Activated CD4-positive, alpha-beta T cell treated with anti-CD3 and anti-CD28 coated beads for 36 hours (primary cell): ENCODE measurements at regions of chr1 and their contacts with region 1.

Region 1: DNA sequence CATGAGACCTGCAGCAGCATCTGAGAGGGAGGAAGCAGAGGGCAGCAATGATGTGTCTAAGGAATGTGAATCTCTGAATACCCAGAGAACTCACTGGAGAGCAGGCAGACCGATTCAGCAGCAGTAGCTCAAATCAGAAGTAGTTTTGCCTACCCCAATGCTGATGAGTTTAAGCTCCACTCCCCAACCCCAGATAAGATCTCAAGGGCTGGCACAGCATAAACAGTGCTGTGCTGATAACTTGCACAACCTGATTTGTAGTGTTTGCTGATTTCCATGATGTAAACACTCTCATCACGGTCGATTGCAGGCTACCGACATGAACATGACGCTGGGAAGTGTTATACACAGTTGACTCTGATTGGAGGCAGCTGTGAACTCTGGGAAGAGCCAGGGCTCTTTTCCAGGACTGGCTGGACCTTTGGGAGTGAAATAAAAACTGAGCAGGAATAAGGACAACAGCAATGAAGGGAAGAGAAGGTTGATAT is 11.2 kb upstream of the HMGCS2 start:
- DNase-seq: no peak
- ATAC-seq: no peak
- H3K4me3 Mint-ChIP-seq: no peak overlapping the region
- H3K27ac Mint-ChIP-seq: no peak overlapping the region
- H3K4me1 Mint-ChIP-seq: no peaks in the 10 kb centered on the region
- H3K27me3 Mint-ChIP-seq: peaks cover 7% of the 10 kb centered on the region

Region 2: GRCh38 chr1:119743781-119744597 is 35.9 kb before region 1 on chr1:
- CTCF ChIA-PET with region 1: interaction called, 3 read pairs
- POLR2A ChIA-PET with region 1: no interaction called
- intact Hi-C with region 1: loop called in 1 of 2 experiments (anchors 2 kb)
- DNase-seq: peak; percentile 76
- ATAC-seq: peak; percentile 83
- H3K4me3 Mint-ChIP-seq: no peak overlapping the region
- H3K27ac Mint-ChIP-seq: no peak overlapping the region
- H3K4me1 Mint-ChIP-seq: peaks cover 13% of the 10 kb centered on the region
- H3K27me3 Mint-ChIP-seq: no peaks in the 10 kb centered on the region

Region 3: DNA sequence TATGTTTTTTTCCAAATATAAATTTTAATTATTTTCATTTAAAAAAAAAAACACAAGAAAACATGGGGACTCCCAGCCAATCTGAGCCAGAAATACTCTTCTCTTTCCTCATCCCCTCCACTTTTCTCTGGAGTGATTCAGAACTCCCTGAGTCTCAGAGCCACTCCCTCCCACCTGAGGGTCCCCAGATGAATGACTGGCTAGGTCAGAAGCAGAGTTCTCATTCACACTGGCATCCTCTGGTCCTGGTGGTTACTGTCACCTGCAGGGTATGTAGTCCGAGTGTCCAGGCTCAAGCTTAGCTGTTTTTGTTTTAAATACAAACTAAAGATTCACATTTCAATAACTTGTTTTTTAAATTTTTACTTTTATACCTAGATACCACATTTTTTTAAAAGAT is 17.5 kb before region 1 on chr1:
- CTCF ChIA-PET with region 1: interaction called, 3 read pairs
- POLR2A ChIA-PET with region 1: no interaction called
- intact Hi-C with region 1: loop called in 1 of 2 experiments (anchors 2 kb)
- DNase-seq: no peak
- ATAC-seq: no peak
- H3K4me3 Mint-ChIP-seq: no peak overlapping the region
- H3K27ac Mint-ChIP-seq: no peak overlapping the region
- H3K4me1 Mint-ChIP-seq: no peaks in the 10 kb centered on the region
- H3K27me3 Mint-ChIP-seq: peaks cover 15% of the 10 kb centered on the region